Activated naive CD4-positive, alpha-beta T cell treated with anti-CD3 and anti-CD28 coated beads for 36 hours (primary cell): ENCODE measurements at regions of chr13 and their contacts with region 1.

Region 1: DNA sequence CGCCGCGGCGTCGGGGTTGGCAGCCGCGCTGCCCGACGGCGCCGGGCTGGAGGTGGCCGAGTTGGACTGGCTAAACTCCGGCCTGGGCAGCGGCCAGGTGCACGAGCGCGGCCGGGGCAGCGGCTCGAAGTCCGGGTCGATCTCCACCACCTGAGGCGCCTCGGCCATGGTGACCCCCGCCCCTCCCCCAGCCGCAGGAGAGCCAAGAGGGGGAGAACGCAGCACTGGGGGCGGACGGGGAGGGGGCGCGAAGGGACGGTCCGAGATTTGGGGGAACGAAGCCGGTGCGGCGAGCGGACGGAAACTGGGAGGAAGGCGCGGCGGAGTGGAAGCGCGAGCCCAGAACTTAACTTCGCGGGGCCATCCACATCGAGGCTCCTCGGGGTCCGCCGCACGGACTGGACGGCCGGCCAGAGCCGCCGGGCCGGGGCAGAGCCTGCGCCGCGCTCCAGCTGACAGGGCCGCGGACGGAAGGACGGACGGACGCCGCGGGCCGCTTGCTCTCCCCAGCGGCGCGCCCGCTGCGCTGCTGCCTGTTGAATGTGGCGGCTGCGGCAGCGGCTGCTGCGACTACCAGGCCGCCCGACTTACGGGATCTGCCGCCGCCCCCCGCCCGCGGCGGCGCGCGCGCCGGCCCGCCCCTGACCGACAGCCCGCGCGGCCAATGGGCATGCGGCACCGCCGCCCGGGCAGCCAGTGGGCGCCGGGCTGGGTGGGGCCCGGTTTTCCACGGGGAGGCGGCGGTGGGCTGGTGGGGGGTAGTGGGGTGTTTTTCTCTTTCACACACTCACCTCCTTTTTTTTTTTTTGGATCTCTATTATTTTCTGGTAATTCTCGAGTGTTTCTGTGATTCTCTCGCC is at the start of gene FOXO1:
- DNase-seq: peak; percentile 84
- H3K4me3 Mint-ChIP-seq: peak within 1 kb of the TSS; percentile 92
- H3K27ac Mint-ChIP-seq: peak within 1 kb of the TSS; percentile 94
- H3K4me1 Mint-ChIP-seq: peaks cover 40% of the 10 kb centered on the region
- H3K27me3 Mint-ChIP-seq: no peaks in the 10 kb centered on the region
- total RNA-seq, gene FOXO1: 30.9 to 32.1 TPM

Region 2: GRCh38 chr13:40102856-40103255 is 563.4 kb before region 1 on chr13:
- CTCF ChIA-PET with region 1: no interaction called
- intact Hi-C with region 1: loop called (anchors 1 kb)
- DNase-seq: peak; percentile 97
- H3K4me3 Mint-ChIP-seq: peak overlapping the region; percentile 66
- H3K27ac Mint-ChIP-seq: peak overlapping the region; percentile 97
- H3K4me1 Mint-ChIP-seq: peaks cover 37% of the 10 kb centered on the region
- H3K27me3 Mint-ChIP-seq: no peaks in the 10 kb centered on the region

Region 3: DNA sequence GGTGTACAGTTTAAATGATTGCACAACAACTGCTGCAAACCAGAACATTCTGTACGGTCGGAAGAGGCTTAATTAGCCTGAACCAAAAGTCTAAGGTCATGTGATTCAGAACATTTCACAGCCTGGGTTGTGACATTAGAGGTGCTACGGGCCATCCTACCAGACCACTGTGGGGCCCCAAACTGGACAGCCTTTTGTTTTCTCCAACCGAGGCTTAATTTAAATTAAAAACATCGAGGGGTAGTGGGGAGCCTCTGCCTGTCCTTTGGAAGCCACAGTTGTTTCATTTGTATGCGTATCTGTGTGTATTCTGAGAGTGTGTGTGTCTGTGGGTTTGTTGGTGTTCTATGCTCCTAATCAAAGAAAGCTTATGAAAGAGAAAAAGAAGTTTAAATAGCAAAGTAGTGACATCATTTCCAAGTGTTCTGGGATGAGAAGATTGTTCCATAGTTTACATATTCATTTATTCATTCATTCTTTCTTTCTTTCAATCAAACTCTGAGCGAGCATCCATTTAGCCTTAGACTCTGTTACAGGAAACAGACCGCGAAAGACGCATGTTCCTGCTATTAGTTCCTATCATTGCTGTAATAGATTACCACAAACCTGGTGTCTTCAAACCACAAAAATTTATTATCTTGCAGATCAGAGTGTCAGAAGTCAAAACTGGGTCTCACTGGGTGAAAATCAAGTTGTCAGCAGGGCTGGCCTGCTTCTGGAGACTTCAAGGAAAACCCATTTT is 444.6 kb before region 1 on chr13:
- CTCF ChIA-PET with region 1: no interaction called
- intact Hi-C with region 1: loop called (anchors 1 kb)
- DNase-seq: peak; percentile 80
- H3K4me3 Mint-ChIP-seq: peak overlapping the region; percentile 25
- H3K27ac Mint-ChIP-seq: peak overlapping the region; percentile 92
- H3K4me1 Mint-ChIP-seq: peaks cover 69% of the 10 kb centered on the region
- H3K27me3 Mint-ChIP-seq: no peaks in the 10 kb centered on the region

Region 4: DNA sequence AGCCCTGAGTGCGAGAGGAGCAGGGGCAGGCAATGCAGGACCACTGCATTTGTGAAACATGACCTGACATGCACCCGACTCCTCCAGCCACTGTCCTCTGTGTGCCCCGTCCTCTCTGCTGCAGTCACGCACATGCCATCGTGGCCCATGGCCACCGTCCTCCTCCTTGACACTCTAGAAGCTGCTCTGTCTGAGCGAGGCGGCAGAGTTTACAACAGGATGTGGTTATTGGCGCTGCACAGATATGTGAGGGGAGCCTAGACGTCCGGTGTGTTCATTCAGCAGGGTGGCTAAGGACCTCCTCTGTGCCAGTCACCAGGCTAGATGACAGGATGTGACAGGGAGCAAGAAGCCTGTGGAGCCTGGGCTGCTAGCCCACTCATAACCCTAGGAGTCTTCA is 277.7 kb before region 1 on chr13:
- CTCF ChIA-PET with region 1: no interaction called
- intact Hi-C with region 1: loop called (anchors 1 kb)
- DNase-seq: peak; percentile 94
- H3K4me3 Mint-ChIP-seq: peak overlapping the region; percentile 77
- H3K27ac Mint-ChIP-seq: peak overlapping the region; percentile 92
- H3K4me1 Mint-ChIP-seq: peaks cover 51% of the 10 kb centered on the region
- H3K27me3 Mint-ChIP-seq: no peaks in the 10 kb centered on the region

Region 5: GRCh38 chr13:40597740-40598370 is 68.4 kb before region 1 on chr13:
- CTCF ChIA-PET with region 1: interaction called, 3 read pairs
- intact Hi-C with region 1: loop called (anchors 1 kb)
- DNase-seq: peak; percentile 24
- H3K4me3 Mint-ChIP-seq: peak overlapping the region; percentile 17
- H3K27ac Mint-ChIP-seq: peak overlapping the region; percentile 93
- H3K4me1 Mint-ChIP-seq: peaks cover 90% of the 10 kb centered on the region
- H3K27me3 Mint-ChIP-seq: no peaks in the 10 kb centered on the region

Region 6: GRCh38 chr13:40682449-40683240 is 16.4 kb after region 1 on chr13:
- CTCF ChIA-PET with region 1: interaction called, 22 read pairs
- intact Hi-C with region 1: no loop called
- DNase-seq: no peak
- H3K4me3 Mint-ChIP-seq: no peak overlapping the region
- H3K27ac Mint-ChIP-seq: no peak overlapping the region
- H3K4me1 Mint-ChIP-seq: peaks cover 12% of the 10 kb centered on the region
- H3K27me3 Mint-ChIP-seq: no peaks in the 10 kb centered on the region